ENCODE measurements at regions of chr1 and their contacts with region 1.

Region 1: GRCh38 chr1:222634180-222635013 is 16.5 kb downstream of the MIA3 start:
- DNase-seq: peak; percentile 100
- ATAC-seq: peak; percentile 76
- H3K4me3 ChIP-seq: no peak overlapping the region
- H3K27ac ChIP-seq: no peak overlapping the region
- H3K4me1 ChIP-seq: no peaks in the 10 kb centered on the region
- H3K27me3 ChIP-seq: no peaks in the 10 kb centered on the region
- CTCF ChIP-seq: peak; percentile 99

Region 2: DNA sequence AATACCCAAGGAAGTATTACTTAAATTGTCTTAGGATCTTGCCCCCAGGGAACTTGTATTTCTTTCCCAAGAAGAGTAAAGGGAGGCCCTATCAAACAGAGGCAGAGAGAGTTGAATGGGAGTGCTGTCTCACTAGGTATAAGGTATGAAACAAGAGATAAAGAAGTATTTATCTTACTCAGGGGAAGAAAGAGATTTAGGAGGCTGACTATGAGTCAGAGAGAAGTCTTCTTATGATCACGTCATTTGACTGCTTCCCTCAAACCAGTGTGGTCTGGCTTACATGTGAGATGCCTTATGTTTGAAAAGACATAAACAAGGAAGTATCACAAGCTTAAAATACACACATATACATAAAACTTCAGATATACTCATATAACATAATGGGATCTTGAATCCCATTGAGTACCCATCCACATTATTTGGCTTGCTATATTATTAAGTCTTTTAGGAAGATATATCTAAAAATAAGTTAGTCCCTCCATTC is 922.2 kb before region 1 on chr1:
- CTCF ChIA-PET with region 1: no interaction called
- POLR2A ChIA-PET with region 1: no interaction called
- intact Hi-C with region 1: loop called (anchors 10 kb)
- DNase-seq: peak; percentile 71
- ATAC-seq: peak; percentile 42
- H3K4me3 ChIP-seq: no peak overlapping the region
- H3K27ac ChIP-seq: peak overlapping the region; percentile 34
- H3K4me1 ChIP-seq: peaks cover 28% of the 10 kb centered on the region
- H3K27me3 ChIP-seq: no peaks in the 10 kb centered on the region
- CTCF ChIP-seq: no peak

Region 3: GRCh38 chr1:222331340-222331739 is 303.1 kb before region 1 on chr1:
- CTCF ChIA-PET with region 1: no interaction called
- POLR2A ChIA-PET with region 1: no interaction called
- intact Hi-C with region 1: no loop called
- DNase-seq: no peak
- ATAC-seq: no peak
- H3K4me3 ChIP-seq: no peak overlapping the region
- H3K27ac ChIP-seq: no peak overlapping the region
- H3K4me1 ChIP-seq: no peaks in the 10 kb centered on the region
- H3K27me3 ChIP-seq: peaks cover 2% of the 10 kb centered on the region; the same call in 1 of the 2 replicates
- CTCF ChIP-seq: no peak

Region 4: GRCh38 chr1:222561656-222562055 is 72.7 kb before region 1 on chr1:
- CTCF ChIA-PET with region 1: interaction called, 13 read pairs
- POLR2A ChIA-PET with region 1: no interaction called
- intact Hi-C with region 1: loop called (anchors 5 kb)
- DNase-seq: no peak
- ATAC-seq: peak; percentile 71
- H3K4me3 ChIP-seq: no peak overlapping the region
- H3K27ac ChIP-seq: no peak overlapping the region
- H3K4me1 ChIP-seq: no peaks in the 10 kb centered on the region
- H3K27me3 ChIP-seq: no peaks in the 10 kb centered on the region
- CTCF ChIP-seq: no peak

Region 5: GRCh38 chr1:222589462-222590302 is 44.7 kb before region 1 on chr1 and contains the start of gene TAF1A:
- CTCF ChIA-PET with region 1: interaction called, 14 read pairs
- POLR2A ChIA-PET with region 1: no interaction called
- intact Hi-C with region 1: no loop called
- DNase-seq: peak; percentile 98
- ATAC-seq: peak; percentile 91
- H3K4me3 ChIP-seq: peak within 1 kb of the TSS; percentile 78
- H3K27ac ChIP-seq: peak within 1 kb of the TSS; percentile 41
- H3K4me1 ChIP-seq: peaks cover 36% of the 10 kb centered on the region
- H3K27me3 ChIP-seq: no peaks in the 10 kb centered on the region
- CTCF ChIP-seq: no peak
- total RNA-seq, gene TAF1A: 27.9 and 29.4 TPM in 2 replicates

Region 6: GRCh38 chr1:222600281-222600680 is 34.1 kb before region 1 on chr1:
- CTCF ChIA-PET with region 1: no interaction called
- POLR2A ChIA-PET with region 1: no interaction called
- intact Hi-C with region 1: loop called (anchors 1 kb)
- DNase-seq: peak; percentile 92
- ATAC-seq: peak; percentile 87
- H3K4me3 ChIP-seq: peak overlapping the region; percentile 1; the same call in 1 of the 2 replicates
- H3K27ac ChIP-seq: peak overlapping the region; percentile 70
- H3K4me1 ChIP-seq: peaks cover 32% of the 10 kb centered on the region
- H3K27me3 ChIP-seq: no peaks in the 10 kb centered on the region
- CTCF ChIP-seq: no peak

Region 7: DNA sequence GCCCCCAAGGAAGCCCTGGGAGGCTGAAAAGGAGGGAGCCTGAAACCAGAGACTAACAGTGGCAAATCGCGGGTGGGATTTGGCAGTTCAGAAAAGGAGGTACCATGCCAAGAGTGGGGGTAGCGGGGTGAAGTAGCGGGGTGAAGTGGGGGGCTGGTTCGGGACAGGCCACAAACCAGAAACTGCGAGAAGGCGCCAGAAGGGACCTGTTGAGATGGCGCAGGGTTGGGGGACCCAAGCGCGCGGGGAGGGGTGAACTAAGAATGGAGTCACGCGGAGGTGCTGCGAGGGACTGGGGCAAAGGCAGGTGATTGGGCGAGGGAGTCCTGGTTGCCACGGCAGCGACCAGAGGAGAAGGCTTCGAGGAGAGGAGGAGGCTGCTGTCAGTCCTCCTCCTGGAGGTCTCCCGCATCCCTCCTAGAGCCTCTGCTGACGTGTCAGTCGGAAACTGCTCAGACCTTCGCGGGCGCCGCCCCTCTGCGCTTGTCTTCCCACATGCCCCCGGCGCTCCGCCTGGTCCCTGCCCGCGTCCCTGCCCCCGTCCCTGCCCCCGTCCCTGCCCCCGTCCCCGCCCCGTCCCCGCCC is 16.9 kb before region 1 on chr1:
- CTCF ChIA-PET with region 1: interaction called, 7 read pairs
- POLR2A ChIA-PET with region 1: interaction called, 6 read pairs
- intact Hi-C with region 1: loop called (anchors 2 kb)
- DNase-seq: peak; percentile 90
- ATAC-seq: peak; percentile 86
- H3K4me3 ChIP-seq: peak overlapping the region; percentile 61
- H3K27ac ChIP-seq: no peak overlapping the region
- H3K4me1 ChIP-seq: peaks cover 13% of the 10 kb centered on the region
- H3K27me3 ChIP-seq: no peaks in the 10 kb centered on the region
- CTCF ChIP-seq: no peak

Region 8: DNA sequence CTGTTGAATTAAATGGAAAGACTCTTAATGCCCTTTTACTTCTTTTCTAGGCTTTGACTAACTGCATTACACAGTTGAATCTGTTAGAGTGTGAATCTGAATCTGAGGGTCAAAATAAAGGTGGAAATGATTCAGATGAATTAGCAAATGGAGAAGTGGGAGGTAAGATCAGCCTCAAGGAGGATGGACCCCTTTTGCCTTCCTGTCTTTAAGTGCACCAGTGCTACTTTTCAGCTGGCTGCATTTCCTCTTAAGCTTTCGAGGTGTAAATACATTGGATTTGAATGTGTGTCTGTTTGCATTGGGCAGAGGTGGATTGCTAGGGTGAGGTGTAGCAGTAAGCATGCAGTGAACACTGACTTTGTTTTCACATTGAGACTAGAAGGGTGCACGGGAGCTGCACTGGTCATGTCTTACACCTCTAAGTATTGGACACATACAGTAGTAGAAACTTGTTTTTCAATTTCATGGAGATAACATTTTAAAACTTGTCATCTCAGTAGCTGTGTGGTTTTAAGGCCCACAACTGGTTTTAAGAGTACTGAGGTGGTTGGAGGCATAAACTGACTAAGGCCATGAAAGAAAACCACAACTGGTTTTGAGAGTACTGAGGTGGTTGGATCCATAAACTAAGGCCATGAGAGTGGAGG is 18.9 kb after region 1 on chr1:
- CTCF ChIA-PET with region 1: no interaction called
- POLR2A ChIA-PET with region 1: no interaction called
- intact Hi-C with region 1: no loop called
- DNase-seq: no peak
- ATAC-seq: no peak
- H3K4me3 ChIP-seq: no peak overlapping the region
- H3K27ac ChIP-seq: no peak overlapping the region
- H3K4me1 ChIP-seq: no peaks in the 10 kb centered on the region
- H3K27me3 ChIP-seq: no peaks in the 10 kb centered on the region
- CTCF ChIP-seq: no peak